Activated CD4-positive, alpha-beta T cell treated with anti-CD3 and anti-CD28 coated beads for 36 hours (primary cell): ENCODE measurements at regions of chr2 and their contacts with region 1.

Region 1: DNA sequence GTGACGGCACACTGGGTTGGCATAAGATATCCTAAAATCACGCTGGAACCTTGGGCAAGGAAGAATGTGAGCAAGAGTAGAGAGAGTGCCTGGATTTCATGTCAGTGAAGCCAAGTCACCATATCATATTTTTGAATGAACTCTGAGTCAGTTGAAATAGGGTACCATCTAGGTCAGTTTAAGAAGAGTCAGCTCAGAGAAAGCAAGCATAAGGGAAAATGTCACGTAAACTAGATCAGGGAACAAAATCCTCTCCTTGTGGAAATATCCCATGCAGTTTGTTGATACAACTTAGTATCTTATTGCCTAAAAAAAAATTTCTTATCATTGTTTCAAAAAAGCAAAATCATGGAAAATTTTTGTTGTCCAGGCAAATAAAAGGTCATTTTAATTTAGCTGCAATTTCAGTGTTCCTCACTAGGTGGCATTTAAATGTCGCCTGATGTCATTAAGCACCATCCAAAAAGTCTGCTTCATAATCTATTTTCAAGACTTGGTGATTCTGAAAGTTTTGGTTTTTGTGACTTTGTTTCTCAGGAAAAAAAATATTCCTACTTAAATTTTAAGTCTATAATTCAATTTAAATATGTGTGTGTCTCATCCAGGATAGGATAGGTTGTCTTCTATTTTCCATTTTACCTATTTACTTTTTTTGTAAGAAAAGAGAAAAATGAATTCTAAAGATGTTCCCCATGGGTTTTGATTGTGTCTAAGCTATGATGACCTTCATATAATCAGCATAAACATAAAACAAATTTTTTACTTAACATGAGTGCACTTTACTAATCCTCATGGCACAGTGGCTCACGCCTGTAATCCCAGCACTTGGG is 19.6 kb downstream of the RSAD2 start:
- DNase-seq: no peak
- ATAC-seq: peak; percentile 69
- H3K4me3 Mint-ChIP-seq: no peak overlapping the region
- H3K27ac Mint-ChIP-seq: peak overlapping the region; percentile 14
- H3K4me1 Mint-ChIP-seq: peaks cover 9% of the 10 kb centered on the region
- H3K27me3 Mint-ChIP-seq: no peaks in the 10 kb centered on the region

Region 2: DNA sequence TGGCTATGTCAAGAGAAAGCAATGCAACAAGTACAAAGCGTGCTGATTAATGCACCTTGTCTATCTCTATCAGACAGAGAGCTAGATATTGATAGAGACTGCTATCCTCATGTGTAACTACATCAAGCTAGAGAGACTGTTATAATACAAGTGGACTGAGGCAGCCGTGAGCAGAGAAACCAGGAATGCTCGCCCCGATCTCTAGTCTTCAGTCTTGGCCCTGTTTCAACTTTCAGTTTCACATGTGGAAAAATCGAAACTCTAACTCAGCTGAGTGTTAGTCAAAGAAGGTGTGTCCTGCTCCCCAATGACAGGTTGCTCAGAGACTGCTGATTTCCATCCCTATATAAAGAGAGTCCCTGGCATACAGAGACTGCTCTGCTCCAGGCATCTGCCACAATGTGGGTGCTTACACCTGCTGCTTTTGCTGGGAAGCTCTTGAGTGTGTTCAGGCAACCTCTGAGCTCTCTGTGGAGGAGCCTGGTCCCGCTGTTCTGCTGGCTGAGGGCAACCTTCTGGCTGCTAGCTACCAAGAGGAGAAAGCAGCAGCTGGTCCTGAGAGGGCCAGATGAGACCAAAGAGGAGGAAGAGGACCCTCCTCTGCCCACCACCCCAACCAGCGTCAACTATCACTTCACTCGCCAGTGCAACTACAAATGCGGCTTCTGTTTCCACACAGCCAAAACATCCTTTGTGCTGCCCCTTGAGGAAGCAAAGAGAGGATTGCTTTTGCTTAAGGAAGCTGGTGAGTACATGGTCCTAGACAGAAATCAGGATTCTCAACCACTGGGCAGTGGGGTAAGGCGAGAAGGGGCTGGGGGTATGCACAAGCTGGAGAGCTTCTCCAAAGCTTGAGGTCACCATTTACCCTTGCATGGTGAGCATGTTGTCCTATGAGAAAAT is 19.5 kb before region 1 on chr2 and contains the start of gene RSAD2:
- CTCF ChIA-PET with region 1: interaction called, 19 read pairs
- POLR2A ChIA-PET with region 1: no interaction called
- intact Hi-C with region 1: no loop called
- DNase-seq: peak; percentile 52
- ATAC-seq: peak; percentile 86
- H3K4me3 Mint-ChIP-seq: peak within 1 kb of the TSS; percentile 68
- H3K27ac Mint-ChIP-seq: peak within 1 kb of the TSS; percentile 38
- H3K4me1 Mint-ChIP-seq: peaks cover 77% of the 10 kb centered on the region
- H3K27me3 Mint-ChIP-seq: no peaks in the 10 kb centered on the region
- total RNA-seq, gene RSAD2: 8.1 to 10.2 TPM

Region 3: DNA sequence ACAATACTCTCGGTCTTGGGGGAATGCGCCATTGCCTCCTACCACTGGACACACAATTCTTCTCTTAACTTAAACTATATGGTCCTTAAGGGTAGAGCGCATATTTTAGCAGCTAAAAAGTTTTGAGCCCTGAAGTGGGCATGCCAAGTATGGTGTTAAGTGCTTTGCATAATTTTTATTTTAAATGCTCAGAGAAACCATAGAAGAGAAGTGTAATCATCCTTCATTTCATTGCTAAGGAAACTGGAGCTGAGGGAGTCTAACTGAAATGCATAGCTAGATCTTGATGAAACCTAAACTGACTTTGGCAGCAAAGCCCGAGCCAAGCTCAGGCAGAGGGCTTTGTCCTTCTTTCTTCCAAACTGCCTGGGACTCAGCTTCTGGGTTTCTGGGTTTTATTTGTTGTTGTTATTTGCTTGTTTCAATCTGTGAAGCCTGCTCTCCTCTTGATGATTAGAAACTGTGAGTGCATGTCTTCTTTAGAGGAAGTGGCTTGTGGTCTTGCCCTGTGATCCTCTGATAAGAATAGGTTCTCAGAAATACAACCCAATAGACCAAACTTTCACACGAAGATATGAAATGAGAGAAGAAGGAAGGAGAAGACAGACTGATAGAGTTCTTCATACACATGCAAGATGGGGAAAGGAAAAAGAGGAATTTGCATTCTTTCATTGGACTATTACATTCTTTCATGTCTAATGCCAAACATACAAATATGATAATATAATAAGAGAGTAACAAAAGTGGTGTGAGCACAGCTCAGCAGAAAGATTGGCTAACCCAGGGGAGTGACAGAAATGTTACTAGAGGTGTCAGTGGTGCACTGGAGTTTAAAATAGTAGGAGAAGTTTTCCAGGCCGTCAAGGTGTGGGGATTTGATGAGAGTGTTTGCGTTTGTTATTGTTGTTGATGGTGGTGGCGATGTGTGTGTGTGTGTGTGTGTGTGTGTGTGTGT is 12.6 kb after region 1 on chr2:
- CTCF ChIA-PET with region 1: interaction called, 47 read pairs
- POLR2A ChIA-PET with region 1: interaction called, 4 read pairs
- intact Hi-C with region 1: loop called in 1 of 2 experiments (anchors 1 kb)
- DNase-seq: peak; percentile 62
- ATAC-seq: peak; percentile 34
- H3K4me3 Mint-ChIP-seq: peak overlapping the region; percentile 75
- H3K27ac Mint-ChIP-seq: peak overlapping the region; percentile 99
- H3K4me1 Mint-ChIP-seq: peaks cover 90% of the 10 kb centered on the region
- H3K27me3 Mint-ChIP-seq: no peaks in the 10 kb centered on the region

Region 4: DNA sequence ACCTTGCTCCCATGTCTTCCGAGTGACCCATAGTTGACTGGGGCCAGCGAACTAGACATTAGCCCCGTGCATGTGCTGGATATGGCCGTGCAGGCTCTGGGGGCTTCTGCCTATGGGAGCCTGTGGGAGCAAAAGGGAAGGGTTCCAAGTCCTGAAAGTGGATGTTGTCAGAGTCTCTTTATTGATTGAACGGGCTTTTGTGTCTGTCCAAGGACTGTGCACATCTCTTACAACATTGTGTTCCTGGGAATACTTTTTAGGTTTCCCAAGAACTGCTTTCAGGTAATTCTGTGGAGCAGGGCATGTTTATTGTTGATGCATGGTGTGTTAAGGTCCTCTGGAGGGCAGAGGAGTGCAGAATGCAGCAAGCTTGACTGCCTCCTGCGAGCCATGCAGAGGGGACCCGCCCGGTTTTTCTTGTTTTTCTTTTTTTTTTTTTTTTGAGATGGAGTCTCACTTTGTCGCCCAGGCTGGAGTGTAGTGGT is 25.1 kb after region 1 on chr2:
- CTCF ChIA-PET with region 1: interaction called, 27 read pairs
- POLR2A ChIA-PET with region 1: interaction called, 3 read pairs
- intact Hi-C with region 1: loop called in 1 of 2 experiments (anchors 1 kb)
- DNase-seq: no peak
- ATAC-seq: no peak
- H3K4me3 Mint-ChIP-seq: no peak overlapping the region
- H3K27ac Mint-ChIP-seq: no peak overlapping the region
- H3K4me1 Mint-ChIP-seq: peaks cover 80% of the 10 kb centered on the region
- H3K27me3 Mint-ChIP-seq: no peaks in the 10 kb centered on the region

Region 5: DNA sequence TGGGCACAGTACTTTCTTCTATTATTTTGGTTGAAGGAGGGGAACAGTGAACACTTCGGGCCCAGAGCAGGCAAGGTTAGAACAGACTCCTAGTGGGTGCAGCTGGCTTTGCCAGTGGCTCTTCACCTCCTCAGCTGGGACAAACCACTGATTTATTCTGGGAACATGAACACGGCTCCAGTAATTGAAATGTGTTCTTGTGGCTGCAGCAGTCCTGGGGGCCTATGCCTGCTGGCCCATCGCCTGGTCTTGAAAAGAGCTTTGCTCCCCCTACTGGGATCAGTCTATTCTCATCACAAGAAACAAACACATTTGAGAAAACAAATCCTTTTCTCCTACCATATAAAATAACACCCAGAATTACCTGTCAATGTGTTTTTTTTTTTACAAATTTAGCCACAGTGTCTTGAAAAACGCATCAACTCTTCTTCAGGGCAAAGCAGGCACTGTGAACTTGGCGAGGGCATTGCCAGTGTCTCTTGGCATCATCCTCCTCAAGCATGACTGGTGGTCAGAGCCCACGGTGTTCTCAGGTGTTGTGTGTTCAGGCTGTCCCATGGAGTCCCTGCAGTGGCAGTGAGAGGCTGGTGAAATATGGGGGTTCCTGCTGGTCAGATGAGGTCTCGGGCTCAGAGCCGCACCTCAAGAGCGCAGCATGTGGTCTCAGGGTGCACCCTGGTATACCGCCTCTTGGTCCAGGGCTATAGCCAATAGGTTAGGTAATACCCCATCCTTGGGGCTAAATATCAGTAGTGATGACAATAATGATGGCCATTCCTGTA is 71.4 kb after region 1 on chr2:
- CTCF ChIA-PET with region 1: interaction called, 4 read pairs
- POLR2A ChIA-PET with region 1: no interaction called
- intact Hi-C with region 1: loop called in 1 of 2 experiments (anchors 5 kb)
- DNase-seq: no peak
- ATAC-seq: no peak
- H3K4me3 Mint-ChIP-seq: no peak overlapping the region
- H3K27ac Mint-ChIP-seq: no peak overlapping the region
- H3K4me1 Mint-ChIP-seq: peaks cover 4% of the 10 kb centered on the region
- H3K27me3 Mint-ChIP-seq: no peaks in the 10 kb centered on the region

Region 6: DNA sequence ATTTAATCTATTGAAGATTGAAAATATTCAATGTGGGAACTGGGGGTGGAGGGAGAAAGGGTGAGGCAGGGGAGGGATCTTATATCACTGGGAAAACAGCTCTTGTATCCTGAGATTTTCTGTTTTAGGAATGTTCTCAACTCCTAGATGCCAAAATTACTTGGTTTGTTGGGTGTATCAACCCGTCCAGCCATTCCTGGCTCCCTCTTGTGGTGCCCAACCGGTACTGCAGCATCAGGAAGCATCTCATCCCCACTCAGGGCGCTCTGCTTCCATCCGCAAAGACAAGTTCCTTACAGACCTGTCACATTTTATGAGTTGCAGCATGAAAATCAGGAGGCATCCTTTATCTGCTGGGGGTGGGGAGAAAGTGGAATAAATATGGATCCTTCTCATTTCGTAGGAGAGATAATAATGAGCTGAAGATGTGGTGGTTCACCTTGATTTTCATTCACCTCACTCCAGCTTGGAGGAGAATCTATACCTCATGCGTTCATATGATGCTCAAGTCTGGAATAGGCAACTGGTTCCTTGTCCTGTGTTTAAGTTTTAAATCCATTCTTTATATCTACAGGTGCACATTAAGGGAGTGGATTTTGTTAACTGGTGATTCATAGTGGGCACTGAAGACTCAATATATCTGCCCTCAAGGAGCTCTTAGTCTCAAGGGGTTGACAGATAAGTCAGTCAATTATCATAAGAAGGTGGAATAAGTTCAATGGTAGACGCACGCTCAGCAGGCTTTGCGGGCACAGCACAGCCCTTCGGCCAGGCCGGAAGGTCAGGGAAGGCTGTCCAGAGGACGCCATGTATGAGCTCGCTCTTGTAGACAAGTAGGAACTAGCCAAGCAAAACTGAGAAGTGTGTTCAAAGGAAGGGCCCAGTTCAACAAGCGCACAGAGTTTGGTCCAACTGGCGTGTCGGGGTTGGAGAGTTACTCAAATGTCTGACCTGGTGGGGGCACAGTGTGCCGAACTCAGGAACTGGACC is 147.4 kb after region 1 on chr2:
- CTCF ChIA-PET with region 1: interaction called, 53 read pairs
- POLR2A ChIA-PET with region 1: no interaction called
- intact Hi-C with region 1: loop called (anchors 1 kb)
- DNase-seq: peak; percentile 74
- ATAC-seq: peak; percentile 76
- H3K4me3 Mint-ChIP-seq: no peak overlapping the region
- H3K27ac Mint-ChIP-seq: no peak overlapping the region
- H3K4me1 Mint-ChIP-seq: peaks cover 30% of the 10 kb centered on the region
- H3K27me3 Mint-ChIP-seq: no peaks in the 10 kb centered on the region